MCF 10A (cell line): ENCODE measurements at regions of chr1 and their contacts with region 1.

Region 1: DNA sequence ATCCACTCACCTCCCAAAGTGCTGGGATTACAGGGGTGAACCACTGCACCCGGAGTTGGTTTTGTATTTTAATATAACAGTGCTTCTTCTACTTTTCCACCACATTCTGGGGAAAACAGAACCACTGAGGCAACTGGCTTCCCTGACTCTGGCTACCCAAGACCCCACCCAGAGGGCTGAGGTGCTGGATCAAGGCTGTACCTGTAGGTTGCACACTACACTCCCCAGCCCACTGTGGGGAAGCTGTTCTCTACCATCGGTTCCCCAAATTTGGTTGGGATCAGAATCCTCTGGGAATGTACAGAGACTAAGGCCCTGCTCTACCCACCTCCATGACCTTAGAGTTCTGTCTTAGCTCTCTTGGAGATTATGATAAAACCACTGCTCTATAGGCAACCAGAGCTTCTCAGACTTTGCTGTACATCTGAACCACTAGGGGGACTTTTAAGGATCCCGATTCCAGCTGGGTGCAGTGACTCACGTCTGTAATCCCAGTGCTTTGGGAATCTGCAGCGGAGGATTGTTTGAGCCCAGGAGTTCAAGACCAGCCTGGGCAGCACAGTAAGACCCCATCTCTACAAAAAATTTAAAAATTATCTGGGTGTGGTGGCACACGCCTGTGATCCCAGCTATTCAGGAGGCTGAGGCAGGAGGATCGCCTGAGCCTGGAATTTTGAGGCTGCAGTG is 51.6 kb downstream of the GNG4 start:
- DNase-seq: peak; percentile 83
- H3K4me3 Mint-ChIP-seq: no peak overlapping the region
- H3K27ac Mint-ChIP-seq: no peak overlapping the region
- H3K4me1 Mint-ChIP-seq: no peaks in the 10 kb centered on the region
- H3K27me3 Mint-ChIP-seq: no peaks in the 10 kb centered on the region
- CTCF ChIP-seq: peak; percentile 70

Region 2: DNA sequence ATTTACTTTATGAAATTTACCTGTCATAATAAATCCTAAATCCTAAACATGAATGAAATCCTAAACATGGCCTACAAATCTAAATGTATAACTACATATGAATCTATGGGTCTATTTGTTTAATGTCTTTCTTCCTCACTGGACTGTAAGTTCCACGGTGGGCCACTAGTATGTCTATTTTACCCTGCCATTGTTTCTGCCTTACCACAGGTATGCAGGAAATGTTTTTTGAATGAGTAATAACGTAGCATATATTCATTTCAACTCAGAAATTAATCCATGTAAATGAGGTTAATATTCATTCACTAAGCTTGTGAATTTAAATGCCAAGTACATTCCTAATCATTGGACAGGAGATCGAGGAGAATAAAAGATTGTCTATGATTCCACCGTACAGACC is 129.0 kb before region 1 on chr1:
- CTCF ChIA-PET with region 1: no interaction called
- POLR2A ChIA-PET with region 1: no interaction called
- intact Hi-C with region 1: no loop called
- DNase-seq: peak; percentile 80
- H3K4me3 Mint-ChIP-seq: no peak overlapping the region
- H3K27ac Mint-ChIP-seq: peak overlapping the region; percentile 61
- H3K4me1 Mint-ChIP-seq: peaks cover 6% of the 10 kb centered on the region
- H3K27me3 Mint-ChIP-seq: no peaks in the 10 kb centered on the region
- CTCF ChIP-seq: no peak

Region 3: DNA sequence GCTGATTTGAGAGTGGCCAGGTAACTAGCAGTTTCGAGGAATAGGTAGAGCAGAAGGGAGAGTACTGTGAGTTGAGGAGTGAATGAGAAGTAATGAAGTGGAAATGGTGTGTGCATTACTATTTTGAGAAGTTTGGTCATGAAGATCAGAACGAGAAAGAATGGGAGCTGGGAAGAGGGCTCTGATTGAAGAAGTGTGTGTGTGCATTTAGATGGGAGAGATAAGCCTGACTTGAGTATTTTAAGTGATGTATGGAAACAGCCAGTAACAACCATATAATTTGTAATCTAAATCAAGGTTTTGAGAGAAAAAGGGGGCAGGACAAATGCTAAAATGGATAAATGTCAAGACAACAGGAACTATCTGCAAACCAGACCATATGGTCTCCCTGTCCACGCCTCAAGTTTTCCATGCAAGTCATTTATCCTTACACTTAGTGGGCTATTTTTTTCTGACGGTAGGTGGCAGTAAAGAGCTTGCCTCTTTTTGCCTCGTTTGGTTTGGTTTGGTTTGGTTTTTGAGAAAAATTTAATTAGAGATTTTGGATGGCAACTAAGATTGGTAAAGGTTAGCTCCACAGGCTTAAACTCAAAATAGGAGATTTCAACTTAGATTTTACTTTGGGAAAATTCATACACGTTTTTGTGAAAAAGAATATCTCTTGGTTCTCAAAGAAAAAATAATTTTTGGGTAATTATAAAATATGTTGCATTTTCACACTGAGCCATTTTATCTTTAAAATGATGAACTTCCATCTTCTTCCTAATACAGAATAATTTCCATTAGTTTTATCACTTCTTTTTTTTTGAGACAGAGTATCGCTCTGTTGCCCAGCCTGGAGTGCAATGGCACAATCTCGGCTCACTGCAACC is 84.3 kb before region 1 on chr1:
- CTCF ChIA-PET with region 1: interaction called, 18 read pairs
- POLR2A ChIA-PET with region 1: interaction called, 3 read pairs
- intact Hi-C with region 1: loop called (anchors 1 kb)
- DNase-seq: peak; percentile 94
- H3K4me3 Mint-ChIP-seq: no peak overlapping the region
- H3K27ac Mint-ChIP-seq: no peak overlapping the region
- H3K4me1 Mint-ChIP-seq: peaks cover 6% of the 10 kb centered on the region
- H3K27me3 Mint-ChIP-seq: no peaks in the 10 kb centered on the region
- CTCF ChIP-seq: peak; percentile 98

Region 4: GRCh38 chr1:235545277-235545930 is 52.6 kb before region 1 on chr1:
- CTCF ChIA-PET with region 1: interaction called, 10 read pairs
- POLR2A ChIA-PET with region 1: no interaction called
- intact Hi-C with region 1: no loop called
- DNase-seq: no peak
- H3K4me3 Mint-ChIP-seq: no peak overlapping the region
- H3K27ac Mint-ChIP-seq: no peak overlapping the region
- H3K4me1 Mint-ChIP-seq: no peaks in the 10 kb centered on the region
- H3K27me3 Mint-ChIP-seq: no peaks in the 10 kb centered on the region
- CTCF ChIP-seq: no peak

Region 5: DNA sequence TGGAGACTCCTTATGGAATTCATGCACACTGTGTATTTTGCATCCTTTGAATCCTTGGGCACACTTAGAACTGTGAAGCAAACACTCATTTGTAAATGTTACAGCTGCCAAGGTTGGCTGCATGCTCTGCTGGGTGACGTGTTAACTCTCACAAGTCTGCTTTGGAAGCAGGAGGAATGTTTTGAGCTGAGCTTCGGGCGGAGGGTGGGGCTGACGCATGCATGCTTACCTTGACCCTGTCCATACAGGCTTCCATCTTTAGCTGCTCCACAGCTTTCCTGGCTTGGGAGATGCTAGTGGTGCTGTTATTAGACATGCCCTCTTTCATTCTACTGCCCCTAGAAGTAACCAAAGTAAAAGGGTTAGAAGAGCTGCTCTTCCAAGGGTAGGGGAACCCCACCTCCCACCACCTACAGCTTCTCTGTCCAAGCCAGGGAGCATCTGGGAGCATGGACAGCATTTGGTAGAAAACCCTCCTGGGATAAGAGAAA is 14.5 kb before region 1 on chr1:
- CTCF ChIA-PET with region 1: interaction called, 19 read pairs
- POLR2A ChIA-PET with region 1: interaction called, 3 read pairs
- intact Hi-C with region 1: no loop called
- DNase-seq: no peak
- H3K4me3 Mint-ChIP-seq: no peak overlapping the region
- H3K27ac Mint-ChIP-seq: no peak overlapping the region
- H3K4me1 Mint-ChIP-seq: peaks cover 4% of the 10 kb centered on the region
- H3K27me3 Mint-ChIP-seq: no peaks in the 10 kb centered on the region
- CTCF ChIP-seq: no peak

Region 6: DNA sequence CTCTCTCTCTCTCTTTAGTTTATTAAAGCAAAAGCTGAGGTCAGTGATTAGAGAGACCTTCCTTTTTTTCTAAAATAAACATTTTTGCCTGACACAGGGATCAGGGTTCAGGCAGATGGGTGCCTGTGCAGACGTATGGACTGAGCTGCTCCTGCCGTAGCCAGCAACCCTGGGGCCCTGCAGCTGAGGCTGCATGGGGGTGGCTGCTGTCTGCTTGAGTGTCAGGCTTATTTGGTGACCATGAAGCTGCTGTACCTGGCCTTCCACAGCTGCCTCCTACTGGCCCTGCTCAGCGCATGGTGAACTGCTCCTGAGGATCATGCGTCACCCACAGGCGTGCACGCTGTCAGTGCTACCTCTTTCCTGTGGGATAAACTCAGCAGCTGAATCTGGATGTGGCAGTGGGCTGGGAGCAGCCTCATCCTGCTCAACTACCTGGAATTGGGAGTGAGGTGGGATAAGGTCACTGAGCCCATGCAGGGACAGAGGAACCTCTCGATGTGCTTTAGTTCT is 16.5 kb after region 1 on chr1:
- CTCF ChIA-PET with region 1: interaction called, 38 read pairs
- POLR2A ChIA-PET with region 1: interaction called, 3 read pairs
- intact Hi-C with region 1: no loop called
- DNase-seq: no peak
- H3K4me3 Mint-ChIP-seq: no peak overlapping the region
- H3K27ac Mint-ChIP-seq: no peak overlapping the region
- H3K4me1 Mint-ChIP-seq: peaks cover 6% of the 10 kb centered on the region
- H3K27me3 Mint-ChIP-seq: no peaks in the 10 kb centered on the region
- CTCF ChIP-seq: no peak

Region 7: DNA sequence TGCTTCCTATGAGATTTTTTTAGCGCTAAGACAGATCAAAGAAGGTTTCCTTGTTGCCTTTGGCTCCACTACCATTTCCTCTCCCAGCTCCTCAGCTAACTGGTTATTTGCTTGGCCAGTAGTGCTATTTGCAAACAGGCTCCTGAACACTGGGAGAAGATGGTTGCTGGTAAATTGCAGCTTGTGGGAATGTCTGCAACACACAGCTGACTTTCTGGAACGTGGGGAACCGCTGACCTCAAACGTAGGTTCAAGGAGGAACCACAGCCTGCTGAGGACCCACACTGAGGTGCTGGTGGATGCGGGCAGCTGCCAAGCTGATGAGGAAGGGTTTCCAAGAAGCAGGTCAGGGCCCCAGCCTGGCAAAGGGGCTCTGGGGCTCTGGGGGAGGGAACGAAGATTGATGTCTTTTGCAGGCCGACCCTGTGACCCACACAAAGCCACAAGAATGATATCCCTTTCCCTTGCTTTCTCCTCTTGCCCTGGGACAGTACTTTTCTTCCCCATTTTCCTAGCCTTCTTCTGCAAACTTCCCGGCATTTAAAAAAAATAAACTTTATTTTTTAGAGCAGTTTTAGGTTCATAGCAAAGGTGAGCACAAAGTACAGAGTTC is 26.8 kb after region 1 on chr1:
- CTCF ChIA-PET with region 1: interaction called, 10 read pairs
- POLR2A ChIA-PET with region 1: interaction called, 3 read pairs
- intact Hi-C with region 1: no loop called
- DNase-seq: no peak
- H3K4me3 Mint-ChIP-seq: no peak overlapping the region
- H3K27ac Mint-ChIP-seq: no peak overlapping the region
- H3K4me1 Mint-ChIP-seq: no peaks in the 10 kb centered on the region
- H3K27me3 Mint-ChIP-seq: no peaks in the 10 kb centered on the region
- CTCF ChIP-seq: no peak

Region 8: GRCh38 chr1:235745503-235746136 is 147.6 kb after region 1 on chr1:
- CTCF ChIA-PET with region 1: no interaction called
- POLR2A ChIA-PET with region 1: no interaction called
- intact Hi-C with region 1: no loop called
- DNase-seq: no peak
- H3K4me3 Mint-ChIP-seq: no peak overlapping the region
- H3K27ac Mint-ChIP-seq: no peak overlapping the region
- H3K4me1 Mint-ChIP-seq: peaks cover 17% of the 10 kb centered on the region
- H3K27me3 Mint-ChIP-seq: no peaks in the 10 kb centered on the region
- CTCF ChIP-seq: no peak

Region 9: DNA sequence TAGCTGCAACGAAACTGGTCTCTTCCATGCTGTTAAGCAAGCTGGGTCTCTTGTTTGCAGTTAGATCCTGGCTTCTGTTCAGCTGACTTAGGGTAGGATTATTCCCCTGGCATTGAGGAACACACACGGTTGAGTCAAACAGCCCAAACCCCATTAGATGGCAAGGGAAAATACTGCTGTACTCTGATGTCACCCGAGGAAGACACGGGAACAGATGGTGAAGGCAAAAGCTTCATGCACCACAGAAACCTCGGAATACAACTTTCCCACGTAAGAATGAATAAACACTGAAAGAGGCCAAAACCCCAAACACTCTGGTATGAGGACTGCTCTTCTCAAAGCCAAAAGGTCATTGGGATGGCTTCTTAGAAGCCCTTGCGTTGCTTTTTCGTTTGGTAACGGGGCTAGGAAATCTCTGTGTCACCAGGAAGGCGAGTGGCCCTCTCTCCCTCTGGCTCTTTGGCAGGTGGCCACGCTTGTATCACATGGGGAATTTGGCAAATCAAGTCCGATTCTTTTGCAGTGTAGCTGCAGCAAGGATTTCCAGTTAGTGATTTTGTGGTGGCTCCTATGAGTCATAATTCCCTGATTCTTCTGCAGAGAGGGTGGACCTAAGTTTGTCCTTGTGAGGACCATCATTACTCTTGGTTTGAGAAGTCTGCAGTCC is 285.4 kb after region 1 on chr1:
- CTCF ChIA-PET with region 1: no interaction called
- POLR2A ChIA-PET with region 1: no interaction called
- intact Hi-C with region 1: no loop called
- DNase-seq: peak; percentile 98
- H3K4me3 Mint-ChIP-seq: peak overlapping the region; percentile 5
- H3K27ac Mint-ChIP-seq: no peak overlapping the region
- H3K4me1 Mint-ChIP-seq: peaks cover 21% of the 10 kb centered on the region
- H3K27me3 Mint-ChIP-seq: no peaks in the 10 kb centered on the region
- CTCF ChIP-seq: no peak